ENCODE measurements at regions of chr14 and their contacts with region 1.

Region 1: DNA sequence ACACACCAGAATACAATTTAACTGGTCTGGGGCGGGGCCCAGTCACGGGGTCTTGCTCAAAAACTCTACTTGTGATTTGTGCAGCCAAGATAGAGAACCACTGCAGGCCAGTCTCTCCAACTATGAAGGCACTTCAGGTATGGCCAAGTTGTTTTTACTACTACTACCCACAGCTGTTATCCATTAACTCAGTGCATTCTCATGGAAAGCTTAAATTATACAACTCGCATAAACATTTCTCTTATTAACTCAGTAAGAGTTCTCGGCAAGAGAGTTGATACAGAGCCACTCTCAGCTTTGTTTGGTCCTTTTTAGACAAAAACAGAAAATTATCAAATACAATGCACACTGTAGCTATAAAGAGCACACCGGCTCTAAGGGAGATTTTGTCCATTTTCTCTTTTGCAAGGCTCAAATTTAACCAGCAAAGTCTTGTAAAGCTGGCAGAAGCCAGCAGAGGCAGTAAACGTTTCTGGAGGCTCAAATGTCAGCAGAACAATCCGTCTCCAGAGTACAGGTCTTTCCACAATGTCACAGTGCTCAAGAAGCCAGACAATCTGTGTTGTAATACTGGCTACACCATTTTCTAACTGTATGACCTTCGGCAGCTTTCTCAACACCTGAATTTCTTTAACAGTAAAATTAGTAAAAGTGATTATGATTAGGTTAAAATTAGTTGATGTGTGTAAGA is 86.0 kb downstream of the PTGER2 start:
- DNase-seq: no peak
- H3K4me3 ChIP-seq: no peak overlapping the region
- H3K27ac ChIP-seq: no peak overlapping the region
- H3K27me3 ChIP-seq: peaks cover 0 to 4% (median 0%) of the 10 kb centered on the region in 45 donors
- CTCF ChIP-seq: no peak

Region 2: GRCh38 chr14:52241087-52241793 is 158.8 kb before region 1 on chr14:
- intact Hi-C with region 1: no loop called
- DNase-seq: no peak
- H3K4me3 ChIP-seq: no peak overlapping the region
- H3K27ac ChIP-seq: no peak overlapping the region
- H3K27me3 ChIP-seq: peaks cover 0 to 11% (median 0%) of the 10 kb centered on the region in 45 donors
- CTCF ChIP-seq: no peak

Region 3: GRCh38 chr14:52325126-52325525 is 74.9 kb before region 1 on chr14:
- intact Hi-C with region 1: loop called in 1 of 2 experiments (anchors 2 kb)
- DNase-seq: no peak
- H3K4me3 ChIP-seq: no peak overlapping the region
- H3K27ac ChIP-seq: no peak overlapping the region
- H3K27me3 ChIP-seq: no peaks in the 10 kb centered on the region
- CTCF ChIP-seq: no peak

Region 4: GRCh38 chr14:52338051-52338681 is 61.9 kb before region 1 on chr14:
- intact Hi-C with region 1: no loop called
- DNase-seq: no peak
- H3K4me3 ChIP-seq: no peak overlapping the region
- H3K27ac ChIP-seq: no peak overlapping the region
- H3K27me3 ChIP-seq: peaks cover 0 to 4% (median 0%) of the 10 kb centered on the region in 45 donors
- CTCF ChIP-seq: no peak

Region 5: DNA sequence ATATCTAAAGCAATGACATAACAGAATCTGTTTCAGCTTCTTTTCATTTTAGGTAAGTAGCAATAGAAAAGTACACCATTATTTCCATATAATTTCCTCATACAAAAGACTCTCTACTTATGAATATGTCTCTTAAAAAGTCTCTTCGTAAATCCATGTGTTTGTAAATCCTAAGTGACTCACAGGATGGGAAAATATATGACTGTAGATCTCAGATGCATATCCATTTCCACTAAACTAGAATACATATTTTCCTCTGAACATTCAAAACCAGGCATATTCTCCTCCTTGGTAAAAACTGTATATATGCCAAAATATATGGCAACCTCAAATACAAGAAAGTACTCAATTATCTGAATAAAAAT is 58.6 kb after region 1 on chr14:
- intact Hi-C with region 1: no loop called
- DNase-seq: no peak
- H3K4me3 ChIP-seq: no peak overlapping the region
- H3K27ac ChIP-seq: no peak overlapping the region
- H3K27me3 ChIP-seq: no peaks in the 10 kb centered on the region
- CTCF ChIP-seq: no peak